ENCODE measurements at regions of chrX and their contacts with region 1.

Region 1: GRCh38 chrX:71181910-71182799 is 37.5 kb downstream of the NLGN3 start:
- DNase-seq: peak; percentile 89
- H3K4me3 ChIP-seq: peak overlapping the region; percentile 15
- H3K27ac ChIP-seq: peak overlapping the region; percentile 72
- H3K4me1 ChIP-seq: no peaks in the 10 kb centered on the region
- H3K27me3 ChIP-seq: no peaks in the 10 kb centered on the region
- CTCF ChIP-seq: no peak

Region 2: DNA sequence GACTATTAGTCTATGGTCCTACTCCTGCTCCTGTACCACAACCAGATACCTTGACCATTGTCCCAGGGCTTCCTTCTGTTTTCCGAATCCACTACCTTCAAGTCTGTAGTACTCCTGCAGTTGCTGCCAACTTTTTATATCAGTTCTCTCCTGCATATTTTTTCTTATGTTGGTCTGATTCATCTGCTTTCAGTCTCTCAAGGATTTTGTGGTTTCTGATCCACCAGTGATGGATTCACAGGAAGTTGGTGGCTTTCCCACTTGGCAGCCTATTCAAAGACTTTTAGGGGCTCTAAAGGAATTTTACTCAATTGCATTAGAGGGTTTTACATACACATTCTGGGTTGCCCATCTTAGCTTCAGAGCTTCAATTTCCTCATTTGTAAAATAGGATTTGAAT is 868.7 kb before region 1 on chrX:
- intact Hi-C with region 1: no loop called
- DNase-seq: no peak
- H3K4me3 ChIP-seq: no peak overlapping the region
- H3K27ac ChIP-seq: no peak overlapping the region
- H3K4me1 ChIP-seq: no peaks in the 10 kb centered on the region
- H3K27me3 ChIP-seq: no peaks in the 10 kb centered on the region
- CTCF ChIP-seq: no peak

Region 3: DNA sequence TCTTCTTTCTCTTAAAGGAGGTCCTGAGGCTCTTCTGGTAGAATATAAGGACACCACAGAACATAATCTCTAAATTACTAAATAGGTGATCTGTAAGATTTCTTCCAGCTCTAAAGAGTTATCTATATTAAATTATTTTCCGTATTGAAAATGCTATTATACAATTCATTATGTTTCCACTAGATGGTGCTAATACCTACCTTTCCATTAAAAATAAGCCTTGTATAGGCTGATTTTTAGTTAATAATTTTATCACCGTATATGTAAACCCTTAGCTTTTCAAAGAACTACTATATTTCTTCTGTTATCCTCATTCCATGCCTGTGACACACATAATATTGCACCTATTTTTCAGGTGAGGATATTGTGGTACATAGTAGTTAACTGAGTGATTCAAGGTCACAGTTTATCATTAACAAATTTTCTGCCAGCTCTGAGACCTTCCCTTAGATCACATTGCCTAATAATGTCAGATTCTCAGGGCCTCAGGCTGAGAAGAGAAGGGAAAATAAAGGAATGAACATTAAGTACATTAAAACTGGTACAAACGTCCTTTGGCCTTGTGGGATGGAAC is 412.4 kb before region 1 on chrX:
- intact Hi-C with region 1: loop called (anchors 10 kb)
- DNase-seq: no peak
- H3K4me3 ChIP-seq: no peak overlapping the region
- H3K27ac ChIP-seq: no peak overlapping the region
- H3K4me1 ChIP-seq: no peaks in the 10 kb centered on the region
- H3K27me3 ChIP-seq: no peaks in the 10 kb centered on the region
- CTCF ChIP-seq: peak; percentile 37

Region 4: DNA sequence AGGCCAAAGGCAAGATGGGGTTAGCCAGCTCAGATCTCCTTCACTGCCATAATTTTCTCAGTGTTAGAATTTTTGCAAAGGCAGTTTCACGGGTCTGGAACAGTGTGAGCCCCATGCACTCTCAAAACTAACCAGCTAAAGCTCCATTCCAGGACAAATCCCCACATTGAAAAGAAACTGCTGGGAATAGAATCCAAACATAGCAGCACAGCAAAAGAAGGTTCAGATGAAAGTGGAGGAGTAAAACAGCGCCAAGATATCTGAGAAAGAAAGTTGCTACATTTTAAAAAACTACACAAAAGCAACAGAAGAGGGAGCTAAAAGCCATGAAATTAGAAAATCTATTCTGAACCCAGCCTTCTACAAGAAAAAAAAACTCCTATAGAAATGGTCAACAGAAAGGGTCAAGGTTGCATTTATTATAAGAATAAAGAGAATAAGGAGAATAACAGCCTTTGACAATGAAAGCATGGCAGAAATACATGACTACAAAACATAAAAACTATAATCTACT is 211.6 kb before region 1 on chrX:
- intact Hi-C with region 1: loop called (anchors 10 kb)
- DNase-seq: no peak
- H3K4me3 ChIP-seq: no peak overlapping the region
- H3K27ac ChIP-seq: no peak overlapping the region
- H3K4me1 ChIP-seq: no peaks in the 10 kb centered on the region
- H3K27me3 ChIP-seq: no peaks in the 10 kb centered on the region
- CTCF ChIP-seq: no peak

Region 5: GRCh38 chrX:71056867-71057266 is 125.3 kb before region 1 on chrX:
- intact Hi-C with region 1: no loop called
- DNase-seq: no peak
- H3K4me3 ChIP-seq: no peak overlapping the region
- H3K27ac ChIP-seq: no peak overlapping the region
- H3K4me1 ChIP-seq: no peaks in the 10 kb centered on the region
- H3K27me3 ChIP-seq: no peaks in the 10 kb centered on the region
- CTCF ChIP-seq: no peak

Region 6: GRCh38 chrX:71254092-71254941 is 72.2 kb after region 1 on chrX and contains the start of gene ZMYM3:
- intact Hi-C with region 1: loop called (anchors 10 kb)
- DNase-seq: peak; percentile 86
- H3K4me3 ChIP-seq: peak within 1 kb of the TSS; percentile 56
- H3K27ac ChIP-seq: peak within 1 kb of the TSS; percentile 16
- H3K4me1 ChIP-seq: no peaks in the 10 kb centered on the region
- H3K27me3 ChIP-seq: no peaks in the 10 kb centered on the region
- CTCF ChIP-seq: no peak
- total RNA-seq, gene ZMYM3: 16.6 to 17.4 TPM

Region 7: DNA sequence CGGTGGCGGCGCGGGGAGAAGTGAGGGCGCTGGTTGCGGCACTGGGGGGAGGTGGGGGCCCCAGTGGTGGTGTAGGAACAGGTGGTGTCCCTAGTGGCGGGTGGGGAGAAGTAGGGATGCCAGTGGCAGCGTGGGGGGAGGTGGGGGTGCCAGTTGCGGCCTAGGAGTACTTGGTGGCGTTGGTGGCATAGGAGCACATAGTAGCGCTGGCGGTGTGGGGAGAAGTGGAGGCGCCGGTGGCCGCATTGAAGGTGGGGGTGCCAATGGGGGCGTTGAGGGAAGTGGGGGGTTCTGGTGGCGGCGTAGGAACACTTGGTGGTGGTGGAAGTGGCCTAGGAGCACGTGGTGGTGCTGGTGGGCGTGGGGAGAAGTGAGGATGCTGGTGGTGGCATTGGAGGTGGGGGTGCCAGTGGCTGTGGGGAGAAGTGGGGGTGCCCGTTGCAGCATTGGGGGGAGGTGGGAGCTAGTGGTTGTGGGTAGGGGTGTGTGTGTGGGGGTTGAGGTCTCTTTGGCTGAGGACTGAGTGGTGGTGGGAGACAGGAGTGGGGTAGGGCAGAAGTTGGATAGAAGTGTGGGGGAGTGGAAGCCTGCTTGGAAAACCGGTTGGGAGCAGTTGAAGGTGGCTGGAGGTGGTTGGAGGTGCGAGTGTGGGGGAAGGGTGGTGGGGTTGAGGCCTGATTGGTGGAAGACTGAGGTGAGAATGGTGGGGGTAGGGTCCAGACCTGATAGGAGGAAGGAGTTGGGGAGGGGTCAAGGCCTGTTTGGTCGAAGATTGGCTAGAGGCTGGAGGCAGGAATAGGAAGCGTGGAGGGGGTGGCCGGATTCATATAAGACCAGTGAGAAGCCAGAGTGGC is 397.2 kb after region 1 on chrX:
- intact Hi-C with region 1: no loop called
- DNase-seq: no peak
- H3K4me3 ChIP-seq: no peak overlapping the region
- H3K27ac ChIP-seq: no peak overlapping the region
- H3K4me1 ChIP-seq: no peaks in the 10 kb centered on the region
- H3K27me3 ChIP-seq: no peaks in the 10 kb centered on the region
- CTCF ChIP-seq: no peak